GM12878 (cell line): ENCODE measurements at regions of chr6 and their contacts with region 1.

Region 1: DNA sequence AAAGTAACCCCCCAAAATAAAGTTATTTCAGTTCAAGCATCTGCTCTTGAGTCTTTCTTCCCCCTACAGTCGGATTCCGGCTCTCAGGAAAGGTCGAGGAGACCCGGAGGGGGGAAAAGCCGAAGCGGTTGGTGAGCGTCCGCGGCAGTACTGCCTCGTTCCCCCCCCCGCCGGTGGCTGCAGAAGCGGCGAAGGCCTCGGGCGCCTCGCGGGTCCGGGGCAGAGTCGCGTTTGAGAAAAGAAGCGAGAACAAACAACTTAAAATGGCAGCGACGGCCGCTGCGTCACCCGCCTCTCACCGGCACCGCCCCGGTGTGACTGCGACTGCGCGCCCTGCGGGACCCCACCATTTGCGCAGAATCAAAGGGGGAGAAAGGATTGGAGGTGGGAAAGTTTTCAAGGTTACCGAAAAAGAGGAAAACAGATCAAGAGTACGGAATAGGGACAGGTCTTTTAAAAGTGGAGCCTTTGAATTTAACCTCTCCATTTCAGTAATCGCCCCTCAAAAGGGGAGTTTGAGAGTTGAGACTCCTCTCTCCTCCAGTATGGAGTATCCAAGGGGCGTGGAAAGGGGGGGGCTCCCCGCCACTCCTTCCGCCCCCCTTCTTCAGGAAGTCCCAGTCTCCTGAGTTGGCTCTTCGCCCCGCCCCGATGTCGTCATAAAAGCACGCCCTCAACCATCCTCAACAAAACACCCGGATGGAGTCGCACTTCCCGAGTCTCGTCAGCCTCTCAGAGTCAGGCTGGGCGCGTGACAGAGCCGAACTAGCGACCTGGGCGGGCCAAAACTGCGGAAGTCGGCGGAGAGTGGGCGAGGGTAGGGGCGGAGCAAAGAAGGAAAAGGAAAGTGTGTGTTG is 1.9 kb upstream of the C6orf62 start:
- DNase-seq: peak; percentile 98
- ATAC-seq: peak; percentile 89
- H3K4me3 ChIP-seq: peak overlapping the region; percentile 86
- H3K27ac ChIP-seq: peak overlapping the region; percentile 95
- H3K4me1 ChIP-seq: no peaks in the 10 kb centered on the region; the same call in 1 of the 2 replicates
- H3K27me3 ChIP-seq: no peaks in the 10 kb centered on the region
- CTCF ChIP-seq: no peak
- EP300 ChIP-seq: no peak
- POLR2A ChIP-seq: peak; percentile 73
- RAD21 ChIP-seq: no peak

Region 2: GRCh38 chr6:24064082-24064481 is 656.8 kb before region 1 on chr6:
- CTCF ChIA-PET with region 1: no interaction called
- POLR2A ChIA-PET with region 1: no interaction called
- RAD21 ChIA-PET with region 1: no interaction called
- SMC1A ChIA-PET with region 1: no interaction called
- in situ Hi-C with region 1: loop called (anchors 25 kb)
- intact Hi-C with region 1: no loop called
- DNase-seq: no peak
- ATAC-seq: peak; percentile 38; the same call in 2 of the 3 replicates
- H3K4me3 ChIP-seq: no peak overlapping the region
- H3K27ac ChIP-seq: no peak overlapping the region
- H3K4me1 ChIP-seq: peaks cover 5% of the 10 kb centered on the region; the same call in 1 of the 2 replicates
- H3K27me3 ChIP-seq: no peaks in the 10 kb centered on the region
- CTCF ChIP-seq: peak; percentile 40 to 59 (median 41); a peak in 5 of 6 replicates
- EP300 ChIP-seq: no peak
- POLR2A ChIP-seq: no peak
- RAD21 ChIP-seq: peak; percentile 85

Region 3: GRCh38 chr6:24666641-24667377 is 54.0 kb before region 1 on chr6 and contains the starts of genes ACOT13 and TDP2:
- CTCF ChIA-PET with region 1: interaction called, 3 read pairs
- POLR2A ChIA-PET with region 1: interaction called, 8 read pairs
- RAD21 ChIA-PET with region 1: interaction called, 5 read pairs
- SMC1A ChIA-PET with region 1: interaction called, 4 read pairs
- in situ Hi-C with region 1: no loop called
- intact Hi-C with region 1: loop called (anchors 2 kb)
- DNase-seq: peak; percentile 86
- ATAC-seq: peak; percentile 97
- H3K4me3 ChIP-seq: peak within 1 kb of the TSS; percentile 94
- H3K27ac ChIP-seq: peak within 1 kb of the TSS; percentile 90
- H3K4me1 ChIP-seq: peaks cover 10% of the 10 kb centered on the region
- H3K27me3 ChIP-seq: no peaks in the 10 kb centered on the region
- CTCF ChIP-seq: peak; percentile 24 to 55 (median 51); a peak in 5 of 6 replicates
- EP300 ChIP-seq: peak in 1 of 2 experiments; percentile 63; a peak in 2 of 4 replicates
- POLR2A ChIP-seq: peak; percentile 90
- RAD21 ChIP-seq: peak; percentile 22; the same call in 1 of the 2 replicates
- polyA plus RNA-seq, gene ACOT13: 54.8 to 60.6 TPM
- polyA plus RNA-seq, gene TDP2: 24.4 to 29.8 TPM

Region 4: DNA sequence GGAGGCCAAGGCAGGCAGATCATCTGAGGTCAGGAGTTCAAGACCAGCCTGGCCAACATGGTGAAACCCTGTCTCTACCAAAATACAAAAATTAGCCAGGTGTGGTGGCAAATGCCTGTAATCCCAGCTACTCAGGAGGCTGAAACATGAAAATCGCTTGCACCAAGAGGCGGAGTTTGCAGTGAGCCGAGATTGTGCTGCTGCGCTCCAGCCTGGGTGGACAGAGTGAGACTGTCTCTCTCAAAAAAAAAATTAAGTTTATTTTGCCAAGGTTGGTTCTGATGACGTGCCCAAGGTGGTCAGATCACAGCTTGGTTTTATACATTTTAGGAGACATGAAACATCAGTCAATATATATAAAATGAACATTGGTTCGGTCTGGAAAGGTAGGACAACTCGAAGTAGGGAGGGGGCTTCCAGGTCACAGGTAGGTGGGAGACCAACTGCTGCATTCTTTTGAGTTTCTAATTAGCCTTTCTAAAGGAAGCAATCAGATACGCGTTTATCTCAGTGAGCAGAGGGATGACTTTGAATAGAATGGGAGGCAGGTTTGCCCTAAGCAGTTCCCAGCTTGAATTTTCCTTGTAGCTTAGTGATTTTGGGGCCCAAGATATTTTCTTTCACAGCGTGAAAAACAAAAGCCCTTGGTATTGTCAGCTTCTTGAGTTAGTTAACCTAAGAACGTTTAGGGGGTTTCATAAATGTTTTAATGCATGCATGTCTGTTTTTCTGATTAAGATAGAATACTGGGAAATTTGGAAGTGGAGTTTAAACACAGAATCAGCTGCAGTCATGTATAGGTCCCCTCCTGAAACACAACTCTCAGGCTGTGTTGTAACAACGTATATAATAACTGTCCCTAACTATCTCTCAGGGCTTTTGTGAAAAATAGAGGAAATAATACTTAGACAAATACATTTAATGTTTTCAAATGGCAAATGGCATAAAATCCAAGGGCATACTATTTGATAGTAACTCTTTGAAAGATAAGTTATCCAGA is 37.2 kb before region 1 on chr6:
- CTCF ChIA-PET with region 1: no interaction called
- POLR2A ChIA-PET with region 1: no interaction called
- RAD21 ChIA-PET with region 1: no interaction called
- SMC1A ChIA-PET with region 1: no interaction called
- in situ Hi-C with region 1: no loop called
- intact Hi-C with region 1: no loop called
- DNase-seq: no peak
- ATAC-seq: no peak
- H3K4me3 ChIP-seq: no peak overlapping the region
- H3K27ac ChIP-seq: no peak overlapping the region
- H3K4me1 ChIP-seq: no peaks in the 10 kb centered on the region
- H3K27me3 ChIP-seq: no peaks in the 10 kb centered on the region
- CTCF ChIP-seq: no peak
- EP300 ChIP-seq: no peak
- POLR2A ChIP-seq: no peak
- RAD21 ChIP-seq: no peak

Region 5: DNA sequence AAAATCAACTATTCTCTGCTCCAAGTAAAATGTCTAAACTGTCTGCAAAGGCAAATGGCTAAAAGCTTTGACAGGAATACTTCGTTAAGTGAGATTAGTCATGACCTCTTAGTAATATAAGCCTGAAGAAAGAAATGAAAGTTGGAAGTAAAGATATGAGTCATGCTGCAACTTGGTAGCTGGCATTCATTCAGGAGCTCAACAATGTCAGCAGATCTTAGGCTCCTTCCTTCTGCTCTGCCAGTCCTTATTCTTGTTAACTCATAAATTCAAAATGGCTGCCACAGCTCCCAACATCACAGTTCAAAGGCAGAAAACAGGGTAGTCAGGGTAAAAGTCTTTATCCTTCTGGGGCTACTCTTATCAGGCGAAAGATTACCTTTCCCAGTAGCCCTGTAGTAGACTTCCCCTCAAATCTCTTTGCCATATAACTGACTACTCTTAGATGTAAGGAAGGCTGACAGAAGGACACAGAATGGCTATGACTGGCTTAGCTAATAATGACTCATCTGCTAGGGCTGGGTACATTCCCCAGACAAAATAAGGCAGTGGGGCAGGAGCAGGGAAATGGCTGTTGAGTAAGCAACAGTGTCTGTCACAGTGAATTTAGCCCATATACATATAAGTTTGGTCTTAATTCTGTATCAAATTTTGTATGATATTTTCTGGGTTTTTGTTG is 22.6 kb after region 1 on chr6:
- CTCF ChIA-PET with region 1: interaction called, 4 read pairs
- POLR2A ChIA-PET with region 1: interaction called, 17 read pairs
- RAD21 ChIA-PET with region 1: interaction called, 12 read pairs
- SMC1A ChIA-PET with region 1: interaction called, 17 read pairs
- in situ Hi-C with region 1: no loop called
- intact Hi-C with region 1: loop called (anchors 1 kb)
- DNase-seq: peak; percentile 81
- ATAC-seq: peak; percentile 95
- H3K4me3 ChIP-seq: peak overlapping the region; percentile 16; the same call in 1 of the 2 replicates
- H3K27ac ChIP-seq: peak overlapping the region; percentile 71
- H3K4me1 ChIP-seq: peaks cover 17% of the 10 kb centered on the region
- H3K27me3 ChIP-seq: no peaks in the 10 kb centered on the region
- CTCF ChIP-seq: no peak
- EP300 ChIP-seq: peak in 1 of 2 experiments; percentile 53; a peak in 1 of 4 replicates
- POLR2A ChIP-seq: no peak
- RAD21 ChIP-seq: no peak

Region 6: GRCh38 chr6:24766680-24767462 is 46.0 kb after region 1 on chr6:
- CTCF ChIA-PET with region 1: interaction called, 3 read pairs
- POLR2A ChIA-PET with region 1: no interaction called
- RAD21 ChIA-PET with region 1: interaction called, 3 read pairs
- SMC1A ChIA-PET with region 1: interaction called, 4 read pairs
- in situ Hi-C with region 1: no loop called
- intact Hi-C with region 1: loop called (anchors 2 kb)
- DNase-seq: no peak
- ATAC-seq: peak; percentile 86
- H3K4me3 ChIP-seq: no peak overlapping the region
- H3K27ac ChIP-seq: no peak overlapping the region
- H3K4me1 ChIP-seq: no peaks in the 10 kb centered on the region
- H3K27me3 ChIP-seq: no peaks in the 10 kb centered on the region
- CTCF ChIP-seq: peak; percentile 24 to 68 (median 45); a peak in 3 of 6 replicates
- EP300 ChIP-seq: no peak
- POLR2A ChIP-seq: no peak
- RAD21 ChIP-seq: peak; percentile 75

Region 7: DNA sequence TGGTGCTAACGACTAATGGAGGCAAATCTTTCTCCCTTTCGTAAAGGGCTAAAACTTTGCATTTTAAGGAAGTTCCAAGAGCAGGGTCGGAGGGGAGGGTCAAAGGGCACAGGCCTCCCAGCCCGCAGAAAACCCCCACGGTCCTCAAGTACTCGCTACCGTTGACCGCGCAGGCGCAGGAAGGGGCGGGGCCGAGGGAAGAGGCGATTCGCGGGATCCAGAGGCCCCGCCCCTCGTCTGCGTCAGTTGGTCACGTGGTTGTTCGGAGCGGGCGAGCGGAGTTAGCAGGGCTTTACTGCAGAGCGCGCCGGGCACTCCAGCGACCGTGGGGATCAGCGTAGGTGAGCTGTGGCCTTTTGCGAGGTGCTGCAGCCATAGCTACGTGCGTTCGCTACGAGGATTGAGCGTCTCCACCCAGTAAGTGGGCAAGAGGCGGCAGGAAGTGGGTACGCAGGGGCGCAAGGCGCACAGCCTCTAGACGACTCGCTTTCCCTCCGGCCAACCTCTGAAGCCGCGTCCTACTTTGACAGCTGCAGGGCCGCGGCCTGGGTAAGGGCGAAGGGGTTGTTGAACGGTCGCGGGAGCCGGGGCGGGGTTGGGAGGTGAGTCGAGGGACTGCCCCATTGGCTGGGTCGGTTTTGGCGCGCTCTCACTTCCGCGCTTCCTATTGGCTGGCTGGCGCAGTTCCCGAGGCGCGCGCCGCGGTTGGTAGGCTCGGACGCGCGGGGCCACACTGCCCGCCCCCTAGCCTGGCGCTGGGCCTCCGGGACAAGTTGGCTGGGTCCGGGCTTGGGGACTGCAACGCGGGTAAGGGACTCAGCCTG is 54.1 kb after region 1 on chr6 and contains the start of gene GMNN:
- CTCF ChIA-PET with region 1: interaction called, 3 read pairs
- POLR2A ChIA-PET with region 1: interaction called, 25 read pairs
- RAD21 ChIA-PET with region 1: interaction called, 13 read pairs
- SMC1A ChIA-PET with region 1: interaction called, 9 read pairs
- in situ Hi-C with region 1: no loop called
- intact Hi-C with region 1: loop called (anchors 2 kb)
- DNase-seq: peak; percentile 78
- ATAC-seq: peak; percentile 94
- H3K4me3 ChIP-seq: peak within 1 kb of the TSS; percentile 79
- H3K27ac ChIP-seq: peak within 1 kb of the TSS; percentile 87
- H3K4me1 ChIP-seq: peaks cover 3% of the 10 kb centered on the region; the same call in 1 of the 2 replicates
- H3K27me3 ChIP-seq: no peaks in the 10 kb centered on the region
- CTCF ChIP-seq: no peak
- EP300 ChIP-seq: no peak
- POLR2A ChIP-seq: peak; percentile 96
- RAD21 ChIP-seq: no peak
- polyA plus RNA-seq, gene GMNN: 146 to 153 TPM

Region 8: GRCh38 chr6:24864343-24864742 is 143.5 kb after region 1 on chr6:
- CTCF ChIA-PET with region 1: no interaction called
- POLR2A ChIA-PET with region 1: no interaction called
- RAD21 ChIA-PET with region 1: no interaction called
- SMC1A ChIA-PET with region 1: no interaction called
- in situ Hi-C with region 1: no loop called
- intact Hi-C with region 1: no loop called
- DNase-seq: no peak
- ATAC-seq: no peak
- H3K4me3 ChIP-seq: no peak overlapping the region
- H3K27ac ChIP-seq: no peak overlapping the region
- H3K4me1 ChIP-seq: peaks cover 14% of the 10 kb centered on the region
- H3K27me3 ChIP-seq: no peaks in the 10 kb centered on the region
- CTCF ChIP-seq: no peak
- EP300 ChIP-seq: no peak
- POLR2A ChIP-seq: no peak
- RAD21 ChIP-seq: no peak